OCI-LY7 (cell line): ENCODE measurements at regions of chr10 and their contacts with region 1.

Region 1: GRCh38 chr10:72319416-72320254 is 35.1 kb downstream of the DNAJB12 start:
- DNase-seq: peak; percentile 95
- H3K4me3 ChIP-seq: peak overlapping the region; percentile 66
- H3K27ac ChIP-seq: peak overlapping the region; percentile 97
- H3K4me1 ChIP-seq: peaks cover 82% of the 10 kb centered on the region
- CTCF ChIP-seq: 0 out of 2 replicates have a peak, but pooled peaks have one; percentile 12

Region 2: GRCh38 chr10:71850637-71851464 is 468.8 kb before region 1 on chr10 and contains the start of gene PSAP:
- CTCF ChIA-PET with region 1: no interaction called
- POLR2A ChIA-PET with region 1: no interaction called
- intact Hi-C with region 1: loop called (anchors 10 kb)
- DNase-seq: peak; percentile 98
- H3K4me3 ChIP-seq: peak within 1 kb of the TSS; percentile 82
- H3K27ac ChIP-seq: peak within 1 kb of the TSS; percentile 55
- H3K4me1 ChIP-seq: peaks cover 55% of the 10 kb centered on the region
- CTCF ChIP-seq: 0 out of 2 replicates have a peak, but pooled peaks have one; percentile 35
- total RNA-seq, gene PSAP: 156 and 163 TPM in 2 replicates

Region 3: DNA sequence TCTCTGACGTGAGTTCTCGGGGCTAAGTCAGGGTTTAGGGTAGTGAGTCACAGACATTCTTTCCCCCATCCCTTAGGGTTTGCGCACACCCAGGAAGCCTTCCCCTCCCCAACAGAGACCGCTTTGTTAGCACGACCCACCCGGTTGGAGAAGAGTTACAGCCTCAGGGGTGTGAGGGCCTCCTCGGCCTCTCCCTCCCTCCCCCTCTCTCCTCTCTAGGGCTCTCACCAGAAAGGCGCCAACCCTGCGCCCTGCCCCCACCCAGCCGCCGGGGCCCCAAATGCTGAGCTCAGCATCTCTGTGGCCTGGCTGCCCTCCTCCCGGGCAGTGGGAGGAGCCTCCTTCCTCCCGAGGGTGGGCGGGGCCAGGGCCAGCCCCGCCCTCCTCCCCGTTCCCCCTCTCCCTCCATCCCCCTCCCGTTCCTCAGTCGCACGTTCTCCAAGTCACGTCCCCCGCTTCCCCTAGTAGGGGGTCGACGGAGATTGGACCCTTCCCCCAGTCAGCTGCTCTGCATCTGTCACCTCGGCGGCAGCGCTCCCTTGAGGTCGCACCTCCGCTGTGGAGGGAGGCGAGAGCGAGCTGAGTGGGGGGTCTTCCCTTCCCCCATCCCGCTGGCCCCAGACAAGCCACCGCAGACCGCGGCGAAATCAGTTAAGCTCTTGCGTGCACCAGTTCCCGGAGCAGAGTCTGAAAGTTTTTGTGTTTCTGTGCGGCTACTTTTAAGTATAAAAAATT is 58.9 kb before region 1 on chr10:
- CTCF ChIA-PET with region 1: interaction called, 7 read pairs
- POLR2A ChIA-PET with region 1: interaction called, 17 read pairs
- intact Hi-C with region 1: loop called (anchors 1 kb)
- DNase-seq: peak; percentile 91
- H3K4me3 ChIP-seq: peak overlapping the region; percentile 66
- H3K27ac ChIP-seq: peak overlapping the region; percentile 74
- H3K4me1 ChIP-seq: peaks cover 80% of the 10 kb centered on the region
- CTCF ChIP-seq: peak; percentile 43

Region 4: DNA sequence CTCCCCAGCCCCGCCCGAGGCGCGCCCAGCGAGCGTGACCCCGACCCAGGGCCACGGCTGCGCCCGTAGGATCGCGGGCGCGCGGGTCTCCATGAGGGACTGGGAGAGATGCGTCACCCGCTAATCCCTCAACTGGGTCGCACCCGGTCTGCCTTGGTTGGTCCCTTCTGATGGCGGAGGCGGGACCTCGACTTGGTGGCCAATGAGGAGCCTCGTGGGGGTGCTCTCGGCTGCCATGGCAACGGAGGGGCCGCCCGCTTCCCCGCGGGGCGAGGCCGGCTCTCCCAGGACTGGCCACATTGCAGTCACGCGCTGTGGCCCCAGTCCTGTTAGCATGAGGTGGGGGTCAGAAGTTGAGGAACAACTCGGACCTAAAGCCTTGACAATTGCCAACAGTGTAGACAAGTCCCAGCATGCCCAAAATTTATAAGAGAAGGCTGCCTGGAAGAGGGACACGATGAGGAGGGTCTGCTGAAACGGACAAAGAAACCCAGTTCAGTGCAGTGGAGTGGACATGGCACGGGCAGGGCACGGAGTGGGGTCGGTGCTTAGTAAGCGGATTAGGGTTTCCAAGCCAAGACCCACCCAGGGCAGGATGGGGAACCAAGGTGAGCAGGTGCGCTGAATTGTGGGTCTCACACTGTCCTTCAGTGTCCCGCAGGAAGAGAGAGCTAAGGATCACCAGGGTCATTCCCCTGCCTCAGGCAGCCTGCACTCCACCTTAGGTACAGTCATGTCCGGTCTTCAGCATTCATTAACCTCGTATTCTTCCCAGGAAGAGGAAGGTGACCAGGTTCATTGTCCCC is 21.5 kb before region 1 on chr10:
- CTCF ChIA-PET with region 1: interaction called, 5 read pairs
- POLR2A ChIA-PET with region 1: interaction called, 14 read pairs
- intact Hi-C with region 1: loop called (anchors 1 kb)
- DNase-seq: peak; percentile 97
- H3K4me3 ChIP-seq: peak overlapping the region; percentile 71
- H3K27ac ChIP-seq: peak overlapping the region; percentile 83
- H3K4me1 ChIP-seq: peaks cover 36% of the 10 kb centered on the region
- CTCF ChIP-seq: no peak

Region 5: DNA sequence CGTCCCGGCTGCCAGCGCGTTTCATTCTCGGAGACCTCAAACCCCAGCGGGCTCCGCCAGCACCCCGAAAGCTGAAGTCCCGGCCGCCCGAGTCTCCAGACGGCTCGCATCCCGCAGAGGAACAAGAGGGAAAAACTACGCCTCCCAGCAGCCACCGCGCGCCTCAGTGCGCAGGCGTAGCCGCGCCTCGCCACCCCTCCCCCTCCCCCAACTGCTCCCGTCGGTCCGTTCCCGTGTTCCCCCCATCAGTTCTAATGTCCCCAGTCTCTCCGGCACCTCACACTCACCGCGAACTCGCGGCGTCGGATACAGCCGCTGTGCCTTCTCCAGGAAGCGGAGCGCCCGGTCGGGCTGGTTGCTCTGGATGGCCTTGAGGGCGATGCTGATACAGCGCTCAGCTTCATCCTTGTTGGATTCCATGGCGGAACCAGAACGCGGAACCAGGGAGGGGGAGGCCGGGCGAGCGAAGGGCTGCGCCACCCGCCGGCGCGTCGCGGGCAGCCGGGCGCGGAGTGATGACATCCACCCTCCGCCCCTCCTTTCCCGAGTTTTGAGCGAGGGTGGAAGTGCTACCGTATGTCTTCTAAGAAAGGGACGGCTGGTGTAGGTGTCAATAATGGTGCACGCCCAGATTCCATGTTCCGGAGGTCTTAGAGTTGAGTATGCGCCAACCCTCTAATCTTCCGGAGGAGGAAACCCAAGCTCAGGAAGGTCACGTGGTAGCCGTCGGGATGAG is 35.0 kb after region 1 on chr10 and contains the start of gene DNAJB12:
- CTCF ChIA-PET with region 1: no interaction called
- POLR2A ChIA-PET with region 1: no interaction called
- intact Hi-C with region 1: no loop called
- DNase-seq: peak; percentile 94
- H3K4me3 ChIP-seq: peak within 1 kb of the TSS; percentile 85
- H3K27ac ChIP-seq: peak within 1 kb of the TSS; percentile 82
- H3K4me1 ChIP-seq: peaks cover 12% of the 10 kb centered on the region
- CTCF ChIP-seq: no peak
- total RNA-seq, gene DNAJB12: 22.8 and 27.4 TPM in 2 replicates

Region 6: DNA sequence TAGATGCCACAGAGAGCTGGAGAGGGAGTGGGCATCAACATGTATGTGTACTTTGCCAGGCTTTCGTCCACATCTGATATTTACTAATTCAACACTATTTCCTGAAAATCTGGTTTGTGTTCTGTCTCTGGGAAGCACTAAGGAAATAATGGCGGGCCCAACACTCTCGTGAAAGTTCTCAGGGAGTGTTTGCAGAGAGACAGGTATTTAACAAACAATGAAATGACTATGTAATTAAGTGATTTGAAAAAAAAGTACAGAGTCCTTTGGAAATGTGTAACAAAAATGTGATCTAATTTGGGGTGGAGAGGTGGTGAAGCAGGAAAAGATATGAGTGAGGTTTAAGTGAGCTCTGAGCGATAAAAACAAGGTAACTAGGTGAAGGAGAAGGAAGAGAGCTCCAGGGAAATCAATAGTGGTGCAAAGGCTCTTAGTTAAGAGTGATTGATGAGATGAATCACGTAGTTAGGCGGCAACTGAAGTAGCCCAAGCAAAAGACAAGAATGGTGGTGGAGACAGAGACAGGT is 130.3 kb after region 1 on chr10:
- CTCF ChIA-PET with region 1: no interaction called
- POLR2A ChIA-PET with region 1: no interaction called
- intact Hi-C with region 1: no loop called
- DNase-seq: no peak
- H3K4me3 ChIP-seq: no peak overlapping the region
- H3K27ac ChIP-seq: no peak overlapping the region
- H3K4me1 ChIP-seq: no peaks in the 10 kb centered on the region
- CTCF ChIP-seq: no peak